Activated B cell treated with CpG ODN at 0.5 μM for 24 hours (primary cell): ENCODE measurements at regions of chr2 and their contacts with region 1.

Region 1: DNA sequence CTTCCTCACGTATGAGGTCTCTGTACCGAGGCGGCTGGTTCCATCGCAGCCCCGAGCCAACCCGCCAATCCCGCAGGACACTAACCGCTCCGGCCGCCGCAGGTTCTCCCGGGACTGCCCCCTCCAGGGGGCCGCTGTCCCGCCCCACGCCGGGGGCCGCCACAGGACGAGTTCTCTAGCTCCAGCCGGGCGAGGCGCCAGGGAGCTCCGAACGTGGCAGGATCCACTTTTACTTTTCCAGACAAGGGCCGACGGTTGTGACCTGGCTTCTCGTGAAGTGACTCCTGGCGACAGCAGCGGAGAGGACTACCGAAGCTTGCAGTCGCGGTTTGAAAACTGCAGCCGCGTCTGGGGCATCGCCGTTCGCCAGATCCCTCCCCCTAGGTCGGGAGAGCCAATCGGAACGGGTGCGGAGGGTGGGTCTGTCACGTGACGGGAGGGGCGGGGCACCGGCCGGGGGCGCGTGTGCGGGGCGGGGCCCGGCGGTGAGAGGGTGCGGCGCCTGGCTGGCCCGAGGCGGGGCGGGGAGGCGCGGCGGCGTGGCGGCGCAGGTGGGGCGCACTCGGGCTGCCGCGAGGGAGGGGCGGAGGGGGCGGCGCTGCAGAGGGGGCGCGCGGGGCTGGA is at the start of gene STK17B:
- DNase-seq: peak; percentile 88
- ATAC-seq: peak; percentile 64
- H3K4me3 Mint-ChIP-seq: peak within 1 kb of the TSS; percentile 99
- H3K27ac Mint-ChIP-seq: peak within 1 kb of the TSS; percentile 98
- H3K4me1 Mint-ChIP-seq: peaks cover 60% of the 10 kb centered on the region
- H3K27me3 Mint-ChIP-seq: no peaks in the 10 kb centered on the region
- CTCF ChIP-seq: no peak
- total RNA-seq, gene STK17B: 203 and 226 TPM in 2 replicates

Region 2: GRCh38 chr2:196101325-196101991 is 69.9 kb before region 1 on chr2:
- CTCF ChIA-PET with region 1: no interaction called
- POLR2A ChIA-PET with region 1: interaction called, 15 read pairs
- intact Hi-C with region 1: loop called (anchors 1 kb)
- DNase-seq: peak; percentile 34
- ATAC-seq: peak; percentile 87
- H3K4me3 Mint-ChIP-seq: peak overlapping the region; percentile 40
- H3K27ac Mint-ChIP-seq: peak overlapping the region; percentile 81
- H3K4me1 Mint-ChIP-seq: peaks cover 77% of the 10 kb centered on the region
- H3K27me3 Mint-ChIP-seq: no peaks in the 10 kb centered on the region
- CTCF ChIP-seq: no peak

Region 3: GRCh38 chr2:196160101-196160500 is 11.3 kb before region 1 on chr2:
- CTCF ChIA-PET with region 1: interaction called, 4 read pairs
- POLR2A ChIA-PET with region 1: interaction called, 88 read pairs
- intact Hi-C with region 1: loop called (anchors 1 kb)
- DNase-seq: no peak
- ATAC-seq: peak; percentile 75
- H3K4me3 Mint-ChIP-seq: peak overlapping the region; percentile 57
- H3K27ac Mint-ChIP-seq: peak overlapping the region; percentile 84
- H3K4me1 Mint-ChIP-seq: peaks cover 86% of the 10 kb centered on the region
- H3K27me3 Mint-ChIP-seq: no peaks in the 10 kb centered on the region
- CTCF ChIP-seq: no peak

Region 4: DNA sequence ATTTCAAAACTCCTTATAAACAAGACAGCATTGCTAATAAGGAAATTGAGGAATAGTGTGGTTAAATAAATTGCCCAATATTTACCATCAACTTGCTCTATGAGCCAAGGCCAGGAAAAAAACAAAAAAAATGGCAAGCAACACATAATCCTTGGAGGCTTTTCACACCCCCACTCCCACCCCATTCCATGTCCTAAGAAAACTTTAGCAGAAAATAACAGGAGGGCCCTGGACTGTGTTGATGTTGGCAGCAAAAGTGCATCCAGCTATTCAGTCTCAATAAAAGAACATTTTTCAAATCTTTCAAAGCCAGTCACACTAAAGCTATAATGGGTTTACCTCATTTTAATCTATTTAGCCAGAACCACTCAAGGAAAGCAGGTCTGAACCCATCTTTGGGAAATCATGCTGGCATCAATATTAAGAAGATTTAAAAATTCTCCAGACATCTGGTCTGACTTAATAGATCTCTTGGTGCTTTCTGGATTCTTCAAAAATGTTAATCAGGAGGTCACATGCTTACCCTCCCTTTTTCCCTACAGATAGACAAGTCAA is 34.6 kb after region 1 on chr2:
- CTCF ChIA-PET with region 1: interaction called, 4 read pairs
- POLR2A ChIA-PET with region 1: interaction called, 63 read pairs
- intact Hi-C with region 1: loop called (anchors 1 kb)
- DNase-seq: no peak
- ATAC-seq: no peak
- H3K4me3 Mint-ChIP-seq: no peak overlapping the region
- H3K27ac Mint-ChIP-seq: peak overlapping the region; percentile 51
- H3K4me1 Mint-ChIP-seq: peaks cover 47% of the 10 kb centered on the region
- H3K27me3 Mint-ChIP-seq: no peaks in the 10 kb centered on the region
- CTCF ChIP-seq: no peak

Region 5: GRCh38 chr2:196249860-196250259 is 78.5 kb after region 1 on chr2:
- CTCF ChIA-PET with region 1: interaction called, 4 read pairs
- POLR2A ChIA-PET with region 1: interaction called, 543 read pairs
- intact Hi-C with region 1: no loop called
- DNase-seq: peak; percentile 29
- ATAC-seq: peak; percentile 90
- H3K4me3 Mint-ChIP-seq: peak overlapping the region; percentile 47
- H3K27ac Mint-ChIP-seq: peak overlapping the region; percentile 91
- H3K4me1 Mint-ChIP-seq: peaks cover 75% of the 10 kb centered on the region
- H3K27me3 Mint-ChIP-seq: no peaks in the 10 kb centered on the region
- CTCF ChIP-seq: no peak

Region 6: GRCh38 chr2:196535742-196536141 is 364.4 kb after region 1 on chr2:
- CTCF ChIA-PET with region 1: no interaction called
- POLR2A ChIA-PET with region 1: no interaction called
- intact Hi-C with region 1: no loop called
- DNase-seq: no peak
- ATAC-seq: no peak
- H3K4me3 Mint-ChIP-seq: no peak overlapping the region
- H3K27ac Mint-ChIP-seq: no peak overlapping the region
- H3K4me1 Mint-ChIP-seq: no peaks in the 10 kb centered on the region
- H3K27me3 Mint-ChIP-seq: peaks cover 5% of the 10 kb centered on the region
- CTCF ChIP-seq: no peak

Region 7: GRCh38 chr2:197152451-197153228 is 981.3 kb after region 1 on chr2:
- CTCF ChIA-PET with region 1: no interaction called
- POLR2A ChIA-PET with region 1: no interaction called
- intact Hi-C with region 1: loop called (anchors 5 kb)
- DNase-seq: no peak
- ATAC-seq: peak; percentile 84
- H3K4me3 Mint-ChIP-seq: peak overlapping the region; percentile 79
- H3K27ac Mint-ChIP-seq: peak overlapping the region; percentile 97
- H3K4me1 Mint-ChIP-seq: peaks cover 97% of the 10 kb centered on the region
- H3K27me3 Mint-ChIP-seq: no peaks in the 10 kb centered on the region
- CTCF ChIP-seq: no peak